Activated CD8-positive, alpha-beta T cell treated with anti-CD3 and anti-CD28 coated beads, Interleukin-2, amount 10 ng/mL, durations not matched to agents 7 days and 5 days (primary cell): ENCODE measurements at regions of chr11 and their contacts with region 1.

Region 1: DNA sequence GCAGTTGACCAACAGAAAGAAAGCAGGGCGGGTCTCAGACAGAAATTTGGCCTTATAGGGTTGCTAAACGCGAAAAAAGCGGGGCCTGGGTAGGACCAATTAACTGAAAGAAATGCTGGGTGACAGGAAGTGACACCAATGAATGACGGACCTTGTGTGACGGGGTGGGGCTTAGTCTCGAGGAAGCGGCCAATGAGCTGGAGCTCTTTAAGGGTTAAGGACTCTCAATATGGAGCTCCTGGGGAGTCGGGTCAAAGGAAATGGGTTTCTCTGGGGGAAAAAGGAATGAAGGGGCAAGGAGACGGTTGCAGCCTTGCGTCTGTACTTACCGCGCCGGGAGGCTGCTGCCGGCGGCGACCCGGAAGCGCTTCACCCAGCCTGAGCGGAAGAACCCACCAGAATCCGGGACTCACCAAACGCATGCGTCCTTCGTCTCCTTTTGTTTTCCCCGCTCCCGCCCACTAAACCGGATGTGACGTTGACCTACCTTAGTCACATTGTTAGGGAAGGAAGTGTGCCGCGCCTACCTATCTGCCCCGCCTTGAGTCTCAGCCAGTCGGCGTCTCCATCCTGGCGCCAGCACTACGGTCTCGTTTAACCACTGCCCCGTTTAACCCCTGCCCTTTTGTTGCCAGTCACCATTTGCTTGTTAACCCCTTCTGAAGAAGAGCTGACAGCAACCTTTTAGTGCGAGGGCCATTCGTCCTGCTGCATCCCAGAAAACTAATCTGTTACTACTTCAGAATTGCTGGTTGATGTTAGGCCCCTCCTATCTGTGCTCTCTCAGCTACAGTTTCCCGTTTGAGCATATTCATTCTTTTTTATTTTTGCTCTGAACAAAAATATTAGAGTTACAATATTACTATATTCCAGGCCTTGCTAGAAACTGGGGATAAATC is at the start of gene ANAPC15:
- DNase-seq: peak; percentile 100
- ATAC-seq: peak; percentile 93
- H3K4me3 Mint-ChIP-seq: peak within 1 kb of the TSS; percentile 95
- H3K27ac Mint-ChIP-seq: peak within 1 kb of the TSS; percentile 100
- H3K4me1 Mint-ChIP-seq: peaks cover 20% of the 10 kb centered on the region
- H3K27me3 Mint-ChIP-seq: no peaks in the 10 kb centered on the region
- total RNA-seq, gene ANAPC15: 62.9 to 69.5 TPM

Region 2: DNA sequence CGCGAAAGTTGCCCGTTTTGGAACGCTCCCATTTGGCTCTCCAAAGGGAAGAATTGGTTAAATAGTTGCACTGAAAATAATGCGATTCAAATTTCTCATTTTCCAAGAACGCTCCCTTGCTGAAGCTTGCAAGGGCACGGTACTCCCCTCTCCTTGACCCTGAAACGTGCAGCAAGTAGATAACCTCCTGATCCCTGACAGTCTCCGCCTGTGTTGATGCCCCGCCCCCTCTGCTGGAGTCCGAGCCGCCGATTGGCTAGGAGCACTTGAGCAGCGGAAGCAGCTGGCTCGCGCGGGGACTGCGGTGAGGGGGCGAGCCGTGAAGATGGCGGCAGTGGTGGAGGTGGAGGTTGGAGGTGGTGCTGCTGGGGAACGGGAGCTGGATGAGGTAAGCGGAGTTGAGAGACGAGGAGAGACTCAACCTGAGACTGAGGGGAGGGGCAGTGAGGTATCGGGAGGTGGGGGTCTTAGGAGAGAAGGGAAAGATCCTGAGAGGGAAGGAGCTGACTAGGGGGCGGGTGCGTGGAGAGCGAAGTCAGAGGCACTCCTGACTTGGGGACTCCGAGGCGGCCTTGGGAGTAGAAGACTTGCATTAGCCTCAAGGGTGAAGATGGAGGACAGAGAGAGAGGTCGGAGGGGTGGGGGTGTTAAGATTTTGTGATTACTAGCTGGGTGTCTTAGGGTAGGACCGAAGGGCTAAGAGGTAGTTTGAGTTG is 183.7 kb before region 1 on chr11 and contains the start of gene RNF121:
- CTCF ChIA-PET with region 1: no interaction called
- POLR2A ChIA-PET with region 1: interaction called, 16 read pairs
- DNase-seq: peak; percentile 99
- ATAC-seq: peak; percentile 92
- H3K4me3 Mint-ChIP-seq: peak within 1 kb of the TSS; percentile 91
- H3K27ac Mint-ChIP-seq: peak within 1 kb of the TSS; percentile 99
- H3K4me1 Mint-ChIP-seq: peaks cover 38% of the 10 kb centered on the region
- H3K27me3 Mint-ChIP-seq: no peaks in the 10 kb centered on the region
- total RNA-seq, gene RNF121: 24.8 to 29.9 TPM

Region 3: GRCh38 chr11:71991494-71991893 is 121.1 kb before region 1 on chr11:
- CTCF ChIA-PET with region 1: no interaction called
- POLR2A ChIA-PET with region 1: no interaction called
- DNase-seq: no peak
- ATAC-seq: no peak
- H3K4me3 Mint-ChIP-seq: no peak overlapping the region
- H3K27ac Mint-ChIP-seq: no peak overlapping the region
- H3K4me1 Mint-ChIP-seq: peaks cover 3% of the 10 kb centered on the region
- H3K27me3 Mint-ChIP-seq: no peaks in the 10 kb centered on the region

Region 4: GRCh38 chr11:72061739-72062396 is 50.7 kb before region 1 on chr11:
- CTCF ChIA-PET with region 1: no interaction called
- POLR2A ChIA-PET with region 1: no interaction called
- DNase-seq: no peak
- ATAC-seq: no peak
- H3K4me3 Mint-ChIP-seq: no peak overlapping the region
- H3K27ac Mint-ChIP-seq: peak overlapping the region; percentile 32
- H3K4me1 Mint-ChIP-seq: peaks cover 15% of the 10 kb centered on the region
- H3K27me3 Mint-ChIP-seq: no peaks in the 10 kb centered on the region

Region 5: GRCh38 chr11:72123117-72123653 is 10.6 kb after region 1 on chr11:
- CTCF ChIA-PET with region 1: interaction called, 3 read pairs
- POLR2A ChIA-PET with region 1: interaction called, 11 read pairs
- DNase-seq: no peak
- ATAC-seq: no peak
- H3K4me3 Mint-ChIP-seq: no peak overlapping the region
- H3K27ac Mint-ChIP-seq: no peak overlapping the region
- H3K4me1 Mint-ChIP-seq: peaks cover 6% of the 10 kb centered on the region
- H3K27me3 Mint-ChIP-seq: peaks cover 4% of the 10 kb centered on the region